WTC11 (cell line): ENCODE measurements at regions of chr11 and their contacts with region 1.

Region 1: GRCh38 chr11:86919557-86920210 is 35.5 kb downstream of the FZD4 start:
- DNase-seq: peak; percentile 15
- ATAC-seq: peak; percentile 66
- H3K4me3 Mint-ChIP-seq: no peak overlapping the region
- H3K27ac Mint-ChIP-seq: peak overlapping the region; percentile 29; the same call in 1 of the 2 replicates
- H3K4me1 Mint-ChIP-seq: peaks cover 29% of the 10 kb centered on the region
- H3K27me3 Mint-ChIP-seq: no peaks in the 10 kb centered on the region; the same call in 1 of the 2 replicates
- CTCF ChIP-seq: peak; percentile 52

Region 2: DNA sequence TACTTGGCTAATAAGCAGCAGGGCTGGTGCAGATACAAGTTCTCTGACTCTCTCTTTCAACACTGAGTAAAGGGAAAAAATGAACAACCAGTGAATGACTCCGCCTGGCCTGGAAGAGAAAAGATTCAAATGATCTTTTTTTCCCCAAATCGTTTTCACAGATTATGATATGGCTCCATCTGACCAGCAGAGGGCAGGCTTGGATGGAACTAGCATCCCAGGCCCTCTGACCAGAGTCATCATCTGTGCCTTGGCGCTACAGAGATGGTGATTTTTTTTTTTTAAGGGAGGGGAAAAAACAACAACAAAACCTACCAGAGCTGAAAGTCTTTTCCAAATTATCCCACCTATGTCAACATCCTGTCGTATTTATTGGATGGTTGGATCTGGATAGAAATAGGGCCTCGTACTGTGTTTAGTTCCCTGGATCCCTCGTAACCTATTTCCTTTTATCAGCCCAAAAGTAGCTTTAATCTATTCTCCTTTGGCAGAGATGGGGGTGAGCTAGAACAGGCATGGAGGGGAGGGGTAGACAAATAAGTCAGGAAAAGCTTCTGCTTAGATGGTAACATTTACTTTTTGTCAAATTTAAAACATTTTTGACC is 49.6 kb before region 1 on chr11:
- CTCF ChIA-PET with region 1: interaction called, 36 read pairs
- POLR2A ChIA-PET with region 1: no interaction called
- DNase-seq: peak; percentile 67
- ATAC-seq: peak; percentile 95
- H3K4me3 Mint-ChIP-seq: no peak overlapping the region
- H3K27ac Mint-ChIP-seq: no peak overlapping the region
- H3K4me1 Mint-ChIP-seq: peaks cover 8% of the 10 kb centered on the region; the same call in 1 of the 2 replicates
- H3K27me3 Mint-ChIP-seq: no peaks in the 10 kb centered on the region
- CTCF ChIP-seq: peak; percentile 65

Region 3: DNA sequence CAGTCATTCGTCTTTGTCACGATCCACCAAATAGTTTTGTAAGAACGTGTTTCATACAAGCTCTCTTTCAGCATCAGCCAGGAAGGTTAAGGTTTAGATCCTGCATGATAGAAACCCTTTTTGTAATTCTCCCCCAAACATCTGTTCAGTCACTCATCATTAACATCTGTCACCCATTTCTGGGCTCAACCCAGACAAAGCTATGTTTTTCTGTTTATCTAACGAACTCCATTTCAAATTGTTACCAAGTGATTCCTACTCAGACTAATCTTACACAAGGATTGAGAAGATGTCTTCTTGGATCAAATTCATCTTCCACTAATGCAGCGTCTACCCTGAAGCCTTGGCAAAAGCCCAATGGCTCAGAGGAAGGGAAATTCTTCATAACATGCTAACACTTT is 23.2 kb before region 1 on chr11:
- CTCF ChIA-PET with region 1: no interaction called
- POLR2A ChIA-PET with region 1: no interaction called
- DNase-seq: no peak
- ATAC-seq: no peak
- H3K4me3 Mint-ChIP-seq: no peak overlapping the region
- H3K27ac Mint-ChIP-seq: no peak overlapping the region
- H3K4me1 Mint-ChIP-seq: no peaks in the 10 kb centered on the region
- H3K27me3 Mint-ChIP-seq: no peaks in the 10 kb centered on the region; the same call in 1 of the 2 replicates
- CTCF ChIP-seq: no peak